Caco-2 (cell line): ENCODE measurements at regions of chr4 and their contacts with region 1.

Region 1: GRCh38 chr4:173735049-173735448 is 205.0 kb upstream of the HAND2 start:
- DNase-seq: no peak
- H3K4me3 ChIP-seq: no peak overlapping the region
- H3K4me3 Mint-ChIP-seq: no peak overlapping the region
- H3K27ac Mint-ChIP-seq: no peak overlapping the region
- H3K4me1 ChIP-seq: no peaks in the 10 kb centered on the region
- H3K4me1 Mint-ChIP-seq: no peaks in the 10 kb centered on the region
- H3K27me3 ChIP-seq: no peaks in the 10 kb centered on the region
- H3K27me3 Mint-ChIP-seq: peaks cover 10% of the 10 kb centered on the region
- CTCF ChIP-seq: no peak

Region 2: GRCh38 chr4:173485164-173485563 is 249.9 kb before region 1 on chr4:
- CTCF ChIA-PET with region 1: no interaction called
- POLR2A ChIA-PET with region 1: no interaction called
- intact Hi-C with region 1: no loop called
- DNase-seq: no peak
- H3K4me3 ChIP-seq: no peak overlapping the region
- H3K4me3 Mint-ChIP-seq: no peak overlapping the region
- H3K27ac Mint-ChIP-seq: no peak overlapping the region
- H3K4me1 ChIP-seq: peaks cover 16% of the 10 kb centered on the region; the same call in 1 of the 2 replicates
- H3K4me1 Mint-ChIP-seq: no peaks in the 10 kb centered on the region
- H3K27me3 ChIP-seq: no peaks in the 10 kb centered on the region
- H3K27me3 Mint-ChIP-seq: no peaks in the 10 kb centered on the region
- CTCF ChIP-seq: no peak

Region 3: GRCh38 chr4:173529477-173530325 is 205.3 kb before region 1 on chr4 and contains the start of gene HAND2:
- CTCF ChIA-PET with region 1: no interaction called
- POLR2A ChIA-PET with region 1: no interaction called
- intact Hi-C with region 1: loop called (anchors 10 kb)
- DNase-seq: no peak
- H3K4me3 ChIP-seq: no peak within 1 kb of the TSS
- H3K4me3 Mint-ChIP-seq: no peak within 1 kb of the TSS
- H3K27ac Mint-ChIP-seq: no peak within 1 kb of the TSS
- H3K4me1 ChIP-seq: no peaks in the 10 kb centered on the region
- H3K4me1 Mint-ChIP-seq: no peaks in the 10 kb centered on the region
- H3K27me3 ChIP-seq: no peaks in the 10 kb centered on the region
- H3K27me3 Mint-ChIP-seq: peaks cover 8% of the 10 kb centered on the region
- CTCF ChIP-seq: no peak
- total RNA-seq, gene HAND2: not detected in 2 replicates

Region 4: DNA sequence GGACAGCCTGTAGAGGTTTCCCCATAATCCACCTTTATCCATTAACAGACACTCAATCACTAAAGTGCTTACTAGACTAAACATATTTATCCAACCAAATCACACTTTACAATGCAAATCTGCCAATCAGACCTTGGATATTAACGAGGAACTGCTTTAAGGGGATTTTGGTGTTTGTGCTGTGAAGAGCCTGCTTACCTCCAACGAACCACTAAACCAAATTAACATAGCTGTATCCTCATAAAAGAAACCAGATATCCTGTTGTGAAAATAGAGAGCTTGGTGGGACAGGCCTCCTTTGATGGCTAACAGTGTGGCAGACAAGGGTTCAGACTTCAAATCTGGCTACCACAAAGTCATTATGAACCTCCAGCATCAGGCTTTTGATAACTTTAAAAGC is 47.6 kb after region 1 on chr4:
- CTCF ChIA-PET with region 1: no interaction called
- POLR2A ChIA-PET with region 1: no interaction called
- intact Hi-C with region 1: no loop called
- DNase-seq: no peak
- H3K4me3 ChIP-seq: no peak overlapping the region
- H3K4me3 Mint-ChIP-seq: no peak overlapping the region
- H3K27ac Mint-ChIP-seq: no peak overlapping the region
- H3K4me1 ChIP-seq: no peaks in the 10 kb centered on the region
- H3K4me1 Mint-ChIP-seq: no peaks in the 10 kb centered on the region
- H3K27me3 ChIP-seq: no peaks in the 10 kb centered on the region
- H3K27me3 Mint-ChIP-seq: no peaks in the 10 kb centered on the region
- CTCF ChIP-seq: no peak